Tibial artery (tissue), 4 donors: ENCODE measurements at regions of chr18 and their contacts with region 1.

Region 1: DNA sequence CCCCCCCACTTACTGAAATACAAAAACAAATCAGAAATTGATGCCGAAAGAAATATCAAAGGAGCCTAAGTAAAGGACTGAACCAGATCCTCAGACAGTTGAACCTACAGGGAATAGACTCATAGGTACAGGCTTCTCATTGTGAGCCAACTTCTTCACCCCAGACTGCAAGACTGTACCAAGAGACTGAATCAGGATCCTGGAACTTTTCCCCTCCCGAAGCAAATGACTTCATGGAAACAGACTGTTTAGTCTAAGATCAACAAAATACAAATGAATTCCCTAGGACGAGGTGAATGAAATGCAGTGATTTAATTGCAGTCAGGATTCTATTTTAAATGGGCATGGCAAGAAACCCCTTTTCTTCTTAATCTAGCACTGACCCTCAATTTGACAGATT is 53.6 kb upstream of the RNF152 start:
- DNase-seq: no peak
- H3K4me3 ChIP-seq: no peak overlapping the region
- H3K27ac ChIP-seq: no peak overlapping the region
- H3K4me1 ChIP-seq: peaks cover 0 to 28% (median 5%) of the 10 kb centered on the region in 4 donors
- H3K27me3 ChIP-seq: no peaks in the 10 kb centered on the region
- CTCF ChIP-seq: no peak

Region 2: DNA sequence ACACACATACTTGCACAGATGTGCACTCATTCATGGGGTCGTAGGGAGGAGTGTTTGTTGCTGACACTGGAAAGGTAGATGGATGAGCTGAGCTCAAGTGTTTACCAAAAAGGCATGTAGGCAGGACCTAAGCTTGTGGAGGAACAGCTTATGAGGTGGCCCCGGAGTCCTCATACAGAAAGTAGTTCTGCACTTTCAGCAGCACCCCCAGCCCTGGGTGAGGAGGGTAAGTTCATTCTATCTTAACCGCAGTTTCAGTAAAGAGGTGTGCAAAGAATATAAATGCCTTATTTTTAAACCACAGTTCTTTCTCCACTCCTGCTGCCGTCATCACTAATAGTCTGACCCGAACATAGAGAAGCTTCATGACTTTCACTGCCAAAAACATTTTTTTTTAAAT is 21.9 kb before region 1 on chr18:
- intact Hi-C with region 1: loop called (anchors 2 kb)
- DNase-seq: no peak
- H3K4me3 ChIP-seq: no peak overlapping the region
- H3K27ac ChIP-seq: no peak overlapping the region
- H3K4me1 ChIP-seq: no peaks in the 10 kb centered on the region
- H3K27me3 ChIP-seq: no peaks in the 10 kb centered on the region
- CTCF ChIP-seq: no peak

Region 3: GRCh38 chr18:62001396-62001795 is 54.9 kb after region 1 on chr18:
- intact Hi-C with region 1: loop called (anchors 5 kb)
- DNase-seq: no peak
- H3K4me3 ChIP-seq: no peak overlapping the region
- H3K27ac ChIP-seq: no peak overlapping the region
- H3K4me1 ChIP-seq: peaks cover 0 to 8% (median 3%) of the 10 kb centered on the region in 4 donors
- H3K27me3 ChIP-seq: no peaks in the 10 kb centered on the region
- CTCF ChIP-seq: no peak

Region 4: DNA sequence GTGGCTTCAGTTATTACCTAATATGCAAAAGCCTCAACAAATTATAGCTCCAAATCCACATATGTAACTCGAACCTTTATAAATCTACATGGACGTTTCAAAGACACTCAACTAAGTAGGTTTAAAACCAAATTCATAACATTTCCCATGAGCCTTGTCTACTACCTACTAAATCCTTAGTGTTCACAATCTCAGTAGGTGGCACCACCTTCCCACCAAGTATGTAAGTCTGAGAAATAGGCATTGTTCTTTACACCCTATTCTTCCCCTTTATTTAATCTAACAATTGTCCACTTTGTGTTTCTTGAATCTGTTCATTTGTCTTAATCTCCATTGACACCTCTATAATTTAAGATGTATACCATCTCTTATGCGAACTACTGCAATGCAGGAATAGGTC is 235.8 kb after region 1 on chr18:
- intact Hi-C with region 1: no loop called
- DNase-seq: no peak
- H3K4me3 ChIP-seq: no peak overlapping the region
- H3K27ac ChIP-seq: no peak overlapping the region
- H3K4me1 ChIP-seq: peaks cover 0 to 15% (median 7%) of the 10 kb centered on the region in 4 donors
- H3K27me3 ChIP-seq: no peaks in the 10 kb centered on the region
- CTCF ChIP-seq: no peak